Activated CD8-positive, alpha-beta T cell treated with anti-CD3 and anti-CD28 coated beads for 36 hours (primary cell): ENCODE measurements at regions of chr12 and their contacts with region 1.

Region 1: DNA sequence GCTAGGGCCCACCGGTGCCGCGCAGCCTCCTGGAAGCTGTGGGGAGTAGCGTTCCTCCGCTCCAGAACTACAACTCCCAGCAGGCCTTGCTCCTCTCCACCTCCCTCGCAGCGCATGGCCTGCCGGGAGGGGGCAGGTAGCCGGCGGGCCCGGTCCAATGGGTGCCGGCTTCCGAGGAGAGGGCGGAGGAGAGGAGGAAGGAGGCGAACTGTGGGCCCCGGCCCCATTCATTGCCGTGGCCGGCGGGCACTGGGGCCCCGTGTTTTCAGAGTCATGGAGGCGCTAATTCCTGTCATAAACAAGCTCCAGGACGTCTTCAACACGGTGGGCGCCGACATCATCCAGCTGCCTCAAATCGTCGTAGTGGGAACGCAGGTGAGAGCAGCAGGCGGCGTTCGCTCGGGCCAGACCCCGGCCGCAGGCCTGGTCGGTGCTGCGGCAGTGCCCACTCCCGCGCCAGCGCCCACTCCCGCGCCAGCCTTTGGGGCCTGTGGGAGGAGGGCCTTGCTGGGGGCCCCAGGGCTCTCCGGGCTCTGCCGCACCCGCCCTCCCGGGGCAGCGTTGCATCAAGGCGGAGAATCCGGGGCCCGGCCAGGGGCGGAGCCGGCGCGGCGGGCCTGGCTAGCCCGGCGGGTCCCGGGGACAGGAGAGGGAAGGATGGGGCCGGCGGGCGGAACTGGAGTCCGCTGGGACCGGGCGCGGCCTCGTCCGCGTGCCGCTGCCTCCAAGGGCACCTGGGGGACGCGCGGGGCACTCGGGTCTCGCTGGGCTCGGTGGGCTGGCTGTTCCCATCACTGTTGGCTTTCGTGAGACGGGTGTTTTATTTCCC is at the start of gene DNM1L:
- DNase-seq: peak; percentile 94
- ATAC-seq: peak; percentile 99
- H3K4me3 Mint-ChIP-seq: peak within 1 kb of the TSS; percentile 95
- H3K27ac Mint-ChIP-seq: peak within 1 kb of the TSS; percentile 87
- H3K4me1 Mint-ChIP-seq: peaks cover 22% of the 10 kb centered on the region
- H3K27me3 Mint-ChIP-seq: no peaks in the 10 kb centered on the region
- CTCF ChIP-seq: no peak
- total RNA-seq, gene DNM1L: 56.9 to 68.3 TPM

Region 2: DNA sequence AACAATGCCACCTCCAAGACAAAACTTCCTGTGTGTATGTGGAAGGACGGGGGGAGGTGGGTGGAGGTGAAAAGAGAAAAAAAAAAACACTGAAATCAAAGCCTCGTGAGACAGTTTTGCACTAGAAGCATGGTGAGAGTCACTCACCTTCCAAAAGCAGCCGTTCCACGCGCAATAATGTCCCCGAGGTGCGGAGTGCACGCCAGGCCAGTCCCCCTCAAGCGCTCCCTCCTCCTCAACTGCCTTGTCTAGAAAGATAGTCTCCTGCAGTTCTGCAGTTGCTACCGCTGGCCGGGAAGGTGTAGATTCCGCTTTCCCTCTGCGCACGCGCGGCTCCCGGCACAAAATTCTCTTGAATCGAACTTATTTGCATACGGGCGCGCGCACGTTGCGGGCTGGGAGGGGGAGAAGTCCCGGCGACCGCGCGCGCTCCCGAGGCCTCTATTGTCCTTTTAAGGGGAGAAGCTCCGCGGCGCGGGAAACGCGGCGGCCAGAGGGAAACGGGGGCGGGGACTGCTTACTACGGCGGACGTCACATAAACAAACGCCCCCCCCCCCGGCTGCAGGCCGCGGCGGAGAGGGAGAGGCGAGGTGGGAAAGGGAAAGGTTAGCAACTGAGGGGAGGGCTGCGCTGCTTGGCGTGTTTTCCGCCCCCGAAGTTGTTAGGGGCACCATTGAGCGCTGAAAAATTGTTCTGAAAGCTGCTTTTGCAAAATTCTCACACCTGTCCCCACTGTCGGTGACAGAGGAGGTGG is 1353.3 kb before region 1 on chr12 and contains the start of gene SINHCAF:
- CTCF ChIA-PET with region 1: no interaction called
- POLR2A ChIA-PET with region 1: no interaction called
- intact Hi-C with region 1: loop called (anchors 10 kb)
- DNase-seq: peak; percentile 100
- ATAC-seq: peak; percentile 68
- H3K4me3 Mint-ChIP-seq: peak within 1 kb of the TSS; percentile 100
- H3K27ac Mint-ChIP-seq: peak within 1 kb of the TSS; percentile 99
- H3K4me1 Mint-ChIP-seq: peaks cover 23% of the 10 kb centered on the region
- H3K27me3 Mint-ChIP-seq: no peaks in the 10 kb centered on the region
- CTCF ChIP-seq: no peak
- total RNA-seq, gene SINHCAF: 171 to 184 TPM